PC-3 (cell line): ENCODE measurements at regions of chr3 and their contacts with region 1.

Region 1: GRCh38 chr3:111717601-111718000 is 122.5 kb upstream of the ZBED2 start:
- DNase-seq: peak; percentile 97
- ATAC-seq: peak; percentile 88
- H3K4me3 ChIP-seq: no peak overlapping the region
- H3K27ac ChIP-seq: peak overlapping the region; percentile 25
- H3K4me1 ChIP-seq: peaks cover 35% of the 10 kb centered on the region
- H3K27me3 ChIP-seq: no peaks in the 10 kb centered on the region
- CTCF ChIP-seq: peak; percentile 98

Region 2: DNA sequence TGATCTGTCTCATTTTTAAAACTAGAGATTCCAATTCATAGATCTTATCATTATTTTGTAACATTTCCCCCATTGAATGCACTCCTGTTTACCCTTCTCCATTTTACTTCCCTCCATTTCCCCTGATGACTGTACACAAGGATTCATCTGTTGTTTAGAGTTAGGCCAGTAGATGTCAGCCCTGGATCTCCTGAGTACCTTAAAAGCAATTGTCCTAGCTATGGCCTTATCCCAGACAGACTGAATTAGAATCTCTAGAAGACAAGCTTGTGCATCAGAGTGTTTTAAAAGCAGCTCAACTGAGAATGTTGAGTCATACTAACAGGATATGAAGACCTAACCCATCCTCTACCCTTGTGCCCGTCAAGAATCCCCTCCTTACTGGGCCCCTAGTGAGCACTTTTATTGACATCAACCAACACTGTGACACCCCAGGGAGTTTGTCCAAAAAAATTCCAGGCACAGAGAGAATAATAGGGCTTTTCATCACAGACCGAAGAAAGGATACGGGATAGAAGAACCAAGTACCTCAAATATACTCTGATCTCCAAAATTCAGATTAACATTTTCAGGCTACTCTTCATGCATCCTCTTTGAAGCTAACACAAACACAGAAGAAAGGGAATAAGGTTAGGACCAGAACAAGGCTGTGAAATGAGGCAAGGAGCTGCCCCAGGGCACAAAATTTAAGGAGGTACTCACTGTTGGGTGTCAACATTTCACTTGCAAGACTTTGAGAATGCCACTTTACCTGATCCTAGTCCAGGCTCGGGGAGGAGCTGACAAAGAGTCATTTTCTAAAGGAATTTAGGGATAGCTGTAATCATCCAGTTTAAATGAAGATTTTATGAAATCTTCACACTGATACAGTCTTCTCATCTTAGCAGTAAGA is 139.6 kb before region 1 on chr3:
- CTCF ChIA-PET with region 1: interaction called, 23 read pairs
- POLR2A ChIA-PET with region 1: no interaction called
- intact Hi-C with region 1: loop called (anchors 1 kb)
- DNase-seq: peak; percentile 93
- ATAC-seq: peak; percentile 83
- H3K4me3 ChIP-seq: no peak overlapping the region
- H3K27ac ChIP-seq: no peak overlapping the region
- H3K4me1 ChIP-seq: peaks cover 45% of the 10 kb centered on the region
- H3K27me3 ChIP-seq: no peaks in the 10 kb centered on the region
- CTCF ChIP-seq: peak; percentile 95

Region 3: GRCh38 chr3:111691293-111691909 is 26.2 kb before region 1 on chr3:
- CTCF ChIA-PET with region 1: interaction called, 9 read pairs
- POLR2A ChIA-PET with region 1: no interaction called
- intact Hi-C with region 1: loop called (anchors 2 kb)
- DNase-seq: peak; percentile 73
- ATAC-seq: peak; percentile 52
- H3K4me3 ChIP-seq: no peak overlapping the region
- H3K27ac ChIP-seq: no peak overlapping the region
- H3K4me1 ChIP-seq: peaks cover 41% of the 10 kb centered on the region
- H3K27me3 ChIP-seq: no peaks in the 10 kb centered on the region
- CTCF ChIP-seq: peak; percentile 88

Region 4: GRCh38 chr3:111803123-111803593 is 85.6 kb after region 1 on chr3:
- CTCF ChIA-PET with region 1: interaction called, 3 read pairs
- POLR2A ChIA-PET with region 1: no interaction called
- intact Hi-C with region 1: loop called (anchors 1 kb)
- DNase-seq: peak; percentile 99
- ATAC-seq: peak; percentile 88
- H3K4me3 ChIP-seq: peak overlapping the region; percentile 29; the same call in 1 of the 2 replicates
- H3K27ac ChIP-seq: peak overlapping the region; percentile 97
- H3K4me1 ChIP-seq: peaks cover 46% of the 10 kb centered on the region
- H3K27me3 ChIP-seq: no peaks in the 10 kb centered on the region
- CTCF ChIP-seq: no peak

Region 5: DNA sequence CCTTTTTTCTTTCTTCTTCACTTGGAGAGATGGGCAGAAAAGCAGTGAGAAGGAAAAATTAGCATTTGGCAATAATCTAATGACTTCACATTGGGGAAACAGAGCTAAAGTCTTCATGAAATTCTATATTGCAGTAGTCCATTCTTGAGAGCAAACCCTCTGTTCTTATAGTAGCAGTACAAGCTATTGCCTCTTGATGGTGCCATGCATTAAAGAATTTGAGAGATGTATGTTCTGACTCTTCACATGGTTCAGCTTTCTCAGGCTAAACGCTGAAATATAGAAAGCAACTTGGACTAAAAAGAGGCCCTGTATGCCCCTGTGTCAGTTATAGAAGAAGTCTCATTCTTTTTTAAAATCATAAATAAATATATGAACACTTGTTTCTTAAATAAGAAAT is 177.5 kb after region 1 on chr3:
- CTCF ChIA-PET with region 1: interaction called, 11 read pairs
- POLR2A ChIA-PET with region 1: no interaction called
- intact Hi-C with region 1: loop called (anchors 1 kb)
- DNase-seq: peak; percentile 80
- ATAC-seq: peak; percentile 79
- H3K4me3 ChIP-seq: no peak overlapping the region
- H3K27ac ChIP-seq: no peak overlapping the region
- H3K4me1 ChIP-seq: peaks cover 25% of the 10 kb centered on the region
- H3K27me3 ChIP-seq: no peaks in the 10 kb centered on the region
- CTCF ChIP-seq: peak; percentile 79